ENCODE measurements at regions of chr18 and their contacts with region 1.

Region 1: GRCh38 chr18:23131693-23132319 is 3.5 kb upstream of the CABLES1 start:
- DNase-seq: peak in 2 of 3 donors; percentile 47 to 53
- ATAC-seq: peak; percentile 61 to 66
- H3K4me3 ChIP-seq: no peak overlapping the region
- H3K27ac ChIP-seq: no peak overlapping the region
- H3K4me1 ChIP-seq: peaks cover 2% of the 10 kb centered on the region
- H3K27me3 ChIP-seq: no peaks in the 10 kb centered on the region

Region 2: DNA sequence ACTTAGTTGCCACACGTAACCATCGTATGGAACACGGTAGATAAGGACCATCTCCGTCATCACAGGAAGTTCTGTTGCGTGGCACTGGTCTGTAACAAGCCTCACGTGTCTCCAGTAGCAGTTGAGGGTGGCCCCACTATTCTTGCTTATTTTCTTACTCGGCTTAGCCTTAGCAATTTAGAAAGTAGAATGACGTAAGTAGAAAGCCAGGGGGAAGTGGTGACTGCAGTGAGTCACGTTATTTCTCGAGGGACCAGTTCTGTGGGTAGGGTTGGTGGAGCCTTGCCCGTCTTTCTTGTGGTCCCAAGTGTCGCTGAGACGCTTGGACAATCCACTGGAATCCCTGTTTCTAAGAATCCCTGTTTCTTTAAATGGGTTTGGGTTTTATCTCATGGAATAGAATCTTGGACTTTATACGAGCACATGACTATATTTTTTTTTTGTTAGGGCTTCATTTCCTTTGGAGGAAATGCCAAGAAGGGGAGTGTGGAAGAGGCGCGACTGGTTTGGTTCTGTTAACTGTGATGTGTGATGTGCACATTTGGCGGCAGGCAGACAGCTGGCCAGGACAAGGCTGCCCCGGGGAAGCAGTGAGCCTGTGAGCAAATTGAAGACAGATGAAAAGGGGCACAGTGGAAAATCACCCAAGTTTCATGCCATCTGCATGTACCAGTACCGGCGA is 99.7 kb after region 1 on chr18:
- intact Hi-C with region 1: loop called in 2 of 4 experiments (anchors 10 kb)
- DNase-seq: peak; percentile 82 to 89 (median 83)
- ATAC-seq: peak; percentile 89 to 90
- H3K4me3 ChIP-seq: no peak overlapping the region
- H3K27ac ChIP-seq: peak overlapping the region; percentile 32
- H3K4me1 ChIP-seq: peaks cover 4% of the 10 kb centered on the region
- H3K27me3 ChIP-seq: no peaks in the 10 kb centered on the region

Region 3: DNA sequence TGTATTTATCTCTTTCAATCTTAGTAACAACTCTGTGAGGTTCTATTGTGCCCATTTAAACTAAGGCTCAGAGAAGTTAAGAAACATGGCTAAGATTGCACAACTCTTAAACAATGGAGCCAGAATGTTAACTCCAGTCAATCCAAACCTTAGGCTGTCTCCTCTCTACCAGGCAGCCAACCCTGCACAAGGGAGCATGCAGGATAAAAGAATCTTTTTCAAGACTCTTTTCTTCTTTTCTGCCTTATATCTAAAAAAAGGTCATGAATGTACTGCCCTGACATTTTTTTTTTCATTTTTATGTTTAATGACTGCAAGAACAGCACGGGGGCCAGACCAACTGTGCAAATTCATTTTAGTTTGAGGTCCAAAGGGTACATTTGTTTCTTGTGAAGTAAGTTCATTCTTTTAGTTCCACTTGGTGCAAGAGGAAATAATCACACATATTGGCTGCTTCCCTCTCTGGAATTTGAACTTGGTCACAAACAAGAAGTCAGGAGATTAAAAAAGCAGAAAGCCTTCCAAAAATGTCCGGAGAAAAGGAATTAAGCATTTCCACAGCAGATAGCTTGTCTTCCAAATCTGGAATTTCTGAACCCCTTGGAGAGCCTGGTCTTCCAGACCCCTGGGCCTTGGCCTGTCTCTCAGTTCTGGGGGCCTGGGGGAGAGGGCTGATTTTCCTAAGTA is 225.3 kb after region 1 on chr18:
- intact Hi-C with region 1: loop called in 3 of 4 experiments (anchors 2 to 5 kb)
- DNase-seq: no peak
- ATAC-seq: peak; percentile 40 to 52
- H3K4me3 ChIP-seq: no peak overlapping the region
- H3K27ac ChIP-seq: peak overlapping the region; percentile 86
- H3K4me1 ChIP-seq: peaks cover 11% of the 10 kb centered on the region
- H3K27me3 ChIP-seq: no peaks in the 10 kb centered on the region

Region 4: DNA sequence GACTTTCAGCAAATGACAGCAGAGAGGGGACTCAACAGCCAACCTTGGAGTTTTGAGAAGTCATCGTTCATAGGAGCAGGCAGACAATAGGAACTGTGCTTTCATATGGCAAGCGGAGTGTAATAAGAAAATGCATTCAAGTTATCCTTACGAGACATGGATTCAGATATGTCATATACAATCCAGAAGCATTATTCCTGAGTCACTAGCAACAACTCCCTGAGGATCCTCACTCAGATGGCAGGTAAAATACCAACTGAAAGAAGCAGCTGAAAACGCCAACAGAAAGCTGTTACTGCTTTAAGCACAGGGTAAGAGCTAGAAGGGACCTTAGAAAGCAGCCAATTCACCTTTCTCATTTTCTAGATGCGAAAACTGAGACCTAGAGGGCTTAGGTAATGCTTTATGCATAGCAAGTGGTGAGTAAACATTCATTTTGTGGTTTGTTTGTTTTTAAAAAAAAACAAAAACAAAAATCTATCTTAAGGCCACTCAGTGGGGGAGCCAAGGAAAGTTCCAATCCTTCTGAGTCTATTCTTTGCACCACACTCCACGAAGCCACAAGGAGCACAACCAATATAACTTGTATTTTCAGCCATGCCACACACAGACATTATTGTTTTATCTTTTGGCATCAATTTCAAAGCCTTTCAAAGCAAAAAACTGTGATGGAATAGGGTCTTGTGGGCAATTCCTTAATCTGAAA is 232.2 kb after region 1 on chr18:
- intact Hi-C with region 1: loop called in 2 of 4 experiments (anchors 5 kb)
- DNase-seq: no peak
- ATAC-seq: no peak
- H3K4me3 ChIP-seq: no peak overlapping the region
- H3K27ac ChIP-seq: no peak overlapping the region
- H3K4me1 ChIP-seq: peaks cover 3% of the 10 kb centered on the region
- H3K27me3 ChIP-seq: no peaks in the 10 kb centered on the region

Region 5: GRCh38 chr18:23412351-23412964 is 280.7 kb after region 1 on chr18:
- intact Hi-C with region 1: loop called in 1 of 4 experiments (anchors 5 kb)
- DNase-seq: no peak
- ATAC-seq: no peak
- H3K4me3 ChIP-seq: no peak overlapping the region
- H3K27ac ChIP-seq: no peak overlapping the region
- H3K4me1 ChIP-seq: peaks cover 1% of the 10 kb centered on the region
- H3K27me3 ChIP-seq: no peaks in the 10 kb centered on the region